ENCODE measurements at regions of chr13 and their contacts with region 1.

Region 1: GRCh38 chr13:97109841-97110492 is 112.2 kb upstream of the MBNL2 start:
- DNase-seq: peak; percentile 96
- ATAC-seq: peak; percentile 98

Region 2: GRCh38 chr13:97212601-97213040 is 102.7 kb after region 1 on chr13:
- intact Hi-C with region 1: loop called (anchors 5 kb)
- DNase-seq: no peak
- ATAC-seq: peak; percentile 86

Measured in left ventricle myocardium superior (tissue), 1 donor.